Ascending aorta (tissue), 2 donors: ENCODE measurements at regions of chr10 and their contacts with region 1.

Region 1: GRCh38 chr10:93458821-93459257 is 23.3 kb downstream of the MYOF start:
- DNase-seq: peak; percentile 81 to 96
- H3K4me3 ChIP-seq: peak overlapping the region in 1 of 2 donors; percentile 8
- H3K27ac ChIP-seq: peak overlapping the region; percentile 86 to 96
- H3K4me1 ChIP-seq: peaks cover 17 to 58% of the 10 kb centered on the region in 2 donors
- H3K27me3 ChIP-seq: no peaks in the 10 kb centered on the region
- CTCF ChIP-seq: no peak

Region 2: GRCh38 chr10:93445097-93445960 is 13.5 kb before region 1 on chr10:
- intact Hi-C with region 1: loop called (anchors 1 kb)
- DNase-seq: peak; percentile 89 to 97
- H3K4me3 ChIP-seq: no peak overlapping the region
- H3K27ac ChIP-seq: peak overlapping the region; percentile 72 to 86
- H3K4me1 ChIP-seq: peaks cover 8 to 38% of the 10 kb centered on the region in 2 donors
- H3K27me3 ChIP-seq: no peaks in the 10 kb centered on the region
- CTCF ChIP-seq: no peak

Region 3: DNA sequence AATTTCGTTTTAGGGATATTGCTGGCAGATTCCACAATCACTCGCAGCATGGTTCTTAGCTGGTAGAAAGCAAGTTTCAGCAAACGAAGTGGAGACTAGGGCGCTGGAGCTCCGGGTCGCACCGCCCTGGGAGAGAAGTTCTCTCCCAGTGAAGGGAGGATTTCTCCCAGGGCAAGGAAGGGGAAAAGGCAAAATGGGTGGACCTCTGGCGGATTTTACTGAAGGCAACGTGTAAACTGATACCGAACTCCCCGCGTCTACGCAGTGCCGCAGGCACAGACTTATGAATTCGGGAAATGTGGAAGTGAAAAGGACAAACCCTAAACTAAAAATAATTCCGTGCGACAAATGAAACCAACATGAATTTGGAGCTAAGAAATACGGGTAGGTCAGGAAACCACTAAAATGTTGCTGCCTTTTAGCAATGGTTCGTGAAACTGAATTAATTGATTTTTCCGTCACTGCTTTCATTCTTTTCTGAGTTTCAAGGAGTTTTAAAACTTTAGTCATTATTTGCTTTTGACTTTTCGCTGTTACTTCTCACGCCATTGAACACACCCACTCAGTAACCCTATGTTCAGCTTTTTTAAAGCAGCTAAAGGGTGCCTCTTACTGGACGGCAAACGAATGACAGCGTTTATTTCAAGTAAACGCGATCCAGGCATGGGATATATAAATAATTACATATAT is 23.5 kb after region 1 on chr10 and contains the start of gene MYOF:
- intact Hi-C with region 1: loop called (anchors 2 kb)
- DNase-seq: peak in 1 of 2 donors; percentile 83
- H3K4me3 ChIP-seq: peak within 1 kb of the TSS; percentile 62 to 69
- H3K27ac ChIP-seq: peak within 1 kb of the TSS; percentile 83 to 88
- H3K4me1 ChIP-seq: peaks cover 2 to 25% of the 10 kb centered on the region in 2 donors
- H3K27me3 ChIP-seq: no peaks in the 10 kb centered on the region
- CTCF ChIP-seq: peak; percentile 37 to 64 (median 61)
- total RNA-seq, gene MYOF: 68.2 TPM

Region 4: GRCh38 chr10:93916257-93917063 is 457.6 kb after region 1 on chr10:
- intact Hi-C with region 1: no loop called
- DNase-seq: no peak
- H3K4me3 ChIP-seq: peak overlapping the region; percentile 11 to 18
- H3K27ac ChIP-seq: no peak overlapping the region
- H3K4me1 ChIP-seq: no peaks in the 10 kb centered on the region
- H3K27me3 ChIP-seq: no peaks in the 10 kb centered on the region
- CTCF ChIP-seq: peak; percentile 20 to 59 (median 53)